Common myeloid progenitor, CD34-positive (primary cell): ENCODE measurements at regions of chr6 and their contacts with region 1.

Region 1: DNA sequence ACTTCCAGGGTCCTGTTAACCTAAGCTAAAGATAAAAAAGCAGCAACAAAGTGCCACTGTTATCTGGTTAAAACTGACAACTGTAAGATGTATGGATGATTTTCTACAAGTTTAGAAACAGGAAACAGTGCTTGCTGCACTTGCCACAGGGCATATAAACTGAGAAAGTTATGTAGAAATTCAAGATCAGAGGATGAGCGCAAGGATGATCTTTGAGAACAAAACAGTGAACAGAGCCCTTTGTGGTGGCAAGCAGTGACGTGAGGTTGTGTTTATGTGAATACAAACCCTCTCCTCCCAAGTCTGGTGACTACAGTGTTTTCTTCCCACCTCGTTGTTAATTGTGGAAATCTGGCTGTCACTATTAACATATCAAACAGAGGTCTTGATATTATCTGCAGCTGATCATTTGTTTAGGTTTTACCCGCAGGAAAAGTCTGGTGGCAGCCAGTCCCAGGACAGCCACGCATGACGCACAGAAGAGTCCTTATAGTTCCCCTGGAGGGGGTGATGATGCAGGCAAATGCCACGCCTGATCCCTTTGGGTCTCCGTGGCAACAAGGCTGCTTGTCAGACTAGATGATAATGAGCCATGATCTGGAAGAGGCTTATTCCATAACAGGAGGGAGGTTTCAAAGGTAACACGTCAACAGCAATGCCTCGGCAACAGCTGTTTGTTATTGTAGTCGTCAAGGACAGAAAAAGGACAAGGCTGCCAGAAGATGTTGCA is 43.1 kb upstream of the TNFAIP3 start:
- DNase-seq: peak; percentile 92 to 94 (median 92)
- H3K4me3 ChIP-seq: no peak overlapping the region
- H3K27ac ChIP-seq: peak overlapping the region; percentile 81 to 86
- H3K4me1 ChIP-seq: peaks cover 18 to 45% (median 39%) of the 10 kb centered on the region in 4 experiments
- H3K27me3 ChIP-seq: no peaks in the 10 kb centered on the region

Region 2: GRCh38 chr6:137767911-137768690 is 55.9 kb before region 1 on chr6:
- CTCF ChIA-PET with region 1: no interaction called
- POLR2A ChIA-PET with region 1: no interaction called
- DNase-seq: peak; percentile 30 to 87 (median 80)
- H3K4me3 ChIP-seq: peak overlapping the region in 1 of 7 experiments; percentile 61
- H3K27ac ChIP-seq: peak overlapping the region; percentile 9 to 23
- H3K4me1 ChIP-seq: peaks cover 5 to 18% (median 15%) of the 10 kb centered on the region in 4 experiments
- H3K27me3 ChIP-seq: no peaks in the 10 kb centered on the region

Region 3: GRCh38 chr6:137811121-137811915 is 12.7 kb before region 1 on chr6:
- CTCF ChIA-PET with region 1: interaction called, 10 read pairs
- POLR2A ChIA-PET with region 1: interaction called, 3 read pairs
- DNase-seq: peak; percentile 88 to 97 (median 96)
- H3K4me3 ChIP-seq: peak overlapping the region in 4 of 7 experiments; percentile 1 to 53 (median 36)
- H3K27ac ChIP-seq: peak overlapping the region; percentile 77 to 85
- H3K4me1 ChIP-seq: peaks cover 8 to 43% (median 27%) of the 10 kb centered on the region in 4 experiments
- H3K27me3 ChIP-seq: no peaks in the 10 kb centered on the region

Region 4: GRCh38 chr6:138923561-138923960 is 1099.6 kb after region 1 on chr6:
- CTCF ChIA-PET with region 1: no interaction called
- POLR2A ChIA-PET with region 1: no interaction called
- DNase-seq: no peak
- H3K4me3 ChIP-seq: no peak overlapping the region
- H3K27ac ChIP-seq: no peak overlapping the region
- H3K4me1 ChIP-seq: no peaks in the 10 kb centered on the region
- H3K27me3 ChIP-seq: no peaks in the 10 kb centered on the region